MCF 10A (cell line): ENCODE measurements at regions of chr16 and their contacts with region 1.

Region 1: DNA sequence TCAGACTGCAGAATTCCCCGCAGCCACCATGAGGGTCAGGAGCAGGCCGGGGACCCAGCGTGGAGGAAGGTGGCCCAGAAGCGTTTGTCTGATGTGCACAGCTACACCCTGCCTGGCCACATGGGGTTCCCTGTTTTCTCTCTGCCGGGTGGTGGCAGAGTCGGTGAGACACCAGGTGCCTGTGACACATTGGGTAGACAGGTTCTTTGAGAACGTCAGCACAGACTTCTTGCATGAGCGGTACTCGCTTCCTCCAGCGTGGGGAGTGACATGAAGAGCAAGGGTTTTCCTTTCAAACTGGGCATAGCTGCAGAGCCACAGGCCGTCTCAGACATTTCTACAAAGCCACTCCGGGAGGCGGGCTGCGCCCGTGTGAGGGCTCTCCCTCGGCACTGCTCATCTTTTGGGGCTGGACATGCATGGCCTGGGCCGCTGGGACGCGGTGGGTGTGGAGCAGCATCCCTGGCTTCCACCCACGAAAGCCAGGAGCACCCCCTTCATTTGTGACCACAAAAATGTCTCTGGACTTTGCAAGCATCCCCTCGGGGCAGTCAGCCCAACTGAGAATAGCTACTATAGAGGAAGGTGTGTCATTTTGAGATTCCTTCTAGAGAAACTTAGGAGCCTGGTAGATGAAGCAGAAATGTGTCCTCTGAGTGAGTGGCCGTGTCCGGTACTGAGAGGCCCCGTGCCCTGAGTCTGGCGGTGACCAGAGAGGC is 26.0 kb downstream of the NME3 start:
- DNase-seq: peak; percentile 88
- H3K4me3 Mint-ChIP-seq: peak overlapping the region; percentile 17
- H3K27ac Mint-ChIP-seq: peak overlapping the region; percentile 89
- H3K4me1 Mint-ChIP-seq: peaks cover 34% of the 10 kb centered on the region
- H3K27me3 Mint-ChIP-seq: no peaks in the 10 kb centered on the region
- CTCF ChIP-seq: no peak

Region 2: DNA sequence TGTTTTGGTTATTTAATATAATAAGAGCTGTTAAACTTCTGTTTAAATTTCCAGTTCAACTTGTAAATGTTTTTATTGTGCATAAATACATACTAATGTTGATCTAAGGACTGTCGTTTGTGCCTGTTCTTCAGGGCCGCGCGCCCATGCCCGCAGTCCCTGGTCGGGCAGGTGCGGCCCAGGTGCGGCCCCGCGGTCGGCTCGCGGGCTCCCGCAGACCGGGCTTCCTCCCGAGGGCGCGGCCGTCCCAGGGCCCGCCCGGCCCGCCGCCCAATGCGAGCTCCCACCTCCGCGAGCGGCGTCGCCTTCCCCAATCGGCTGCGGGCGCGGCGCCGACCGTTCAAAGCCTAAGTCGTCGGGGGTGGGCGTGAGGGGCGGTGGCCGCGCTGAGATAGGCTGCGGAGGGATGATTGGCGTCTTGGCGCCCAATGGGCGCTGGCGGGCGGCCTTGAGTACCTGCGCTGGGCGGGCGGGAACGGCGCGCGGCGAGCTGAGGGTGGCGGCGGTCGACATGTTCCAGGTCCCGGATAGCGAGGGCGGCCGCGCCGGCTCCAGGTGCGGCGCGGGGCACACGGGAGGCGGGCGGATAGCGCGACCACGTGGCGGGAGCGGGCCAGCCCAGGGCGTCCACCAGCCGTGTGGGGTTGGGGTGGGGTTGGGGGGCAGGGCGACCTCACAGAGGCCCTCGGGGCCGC is 67.4 kb before region 1 on chr16 and contains the start of gene JPT2:
- CTCF ChIA-PET with region 1: no interaction called
- POLR2A ChIA-PET with region 1: interaction called, 32 read pairs
- intact Hi-C with region 1: no loop called
- DNase-seq: peak; percentile 98
- H3K4me3 Mint-ChIP-seq: peak within 1 kb of the TSS; percentile 94
- H3K27ac Mint-ChIP-seq: peak within 1 kb of the TSS; percentile 80
- H3K4me1 Mint-ChIP-seq: peaks cover 26% of the 10 kb centered on the region
- H3K27me3 Mint-ChIP-seq: no peaks in the 10 kb centered on the region
- CTCF ChIP-seq: no peak
- total RNA-seq, gene JPT2: 111 and 131 TPM in 2 replicates

Region 3: DNA sequence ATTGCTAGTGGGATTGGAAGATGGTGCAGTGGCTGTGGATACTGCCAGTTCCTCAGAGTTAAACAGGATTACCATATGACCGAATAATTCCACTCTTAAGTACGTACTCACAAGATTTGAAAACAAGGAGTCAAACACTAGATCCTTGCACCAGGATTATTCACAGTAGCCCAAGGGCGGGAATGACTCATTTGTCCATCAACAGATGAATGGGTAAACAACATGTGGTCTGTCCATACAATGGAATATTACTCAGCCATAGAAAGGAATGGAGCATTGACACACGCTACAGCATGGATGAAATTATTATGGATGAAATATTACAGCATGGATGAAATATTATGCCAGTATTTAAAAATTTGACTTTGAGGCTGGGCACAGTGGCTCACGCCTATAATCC is 48.5 kb before region 1 on chr16:
- CTCF ChIA-PET with region 1: no interaction called
- POLR2A ChIA-PET with region 1: interaction called, 26 read pairs
- intact Hi-C with region 1: no loop called
- DNase-seq: peak; percentile 74
- H3K4me3 Mint-ChIP-seq: no peak overlapping the region
- H3K27ac Mint-ChIP-seq: no peak overlapping the region
- H3K4me1 Mint-ChIP-seq: peaks cover 17% of the 10 kb centered on the region
- H3K27me3 Mint-ChIP-seq: no peaks in the 10 kb centered on the region
- CTCF ChIP-seq: no peak

Region 4: GRCh38 chr16:1723450-1724147 is 21.7 kb before region 1 on chr16:
- CTCF ChIA-PET with region 1: interaction called, 13 read pairs
- POLR2A ChIA-PET with region 1: interaction called, 6 read pairs
- intact Hi-C with region 1: no loop called
- DNase-seq: peak; percentile 62
- H3K4me3 Mint-ChIP-seq: no peak overlapping the region
- H3K27ac Mint-ChIP-seq: no peak overlapping the region
- H3K4me1 Mint-ChIP-seq: peaks cover 6% of the 10 kb centered on the region
- H3K27me3 Mint-ChIP-seq: no peaks in the 10 kb centered on the region
- CTCF ChIP-seq: peak; percentile 62